HEK293 (cell line): ENCODE measurements at regions of chr1 and their contacts with region 1.

Region 1: GRCh38 chr1:61043010-61043820 is 39.1 kb upstream of the NFIA start:
- H3K4me3 ChIP-seq: peak overlapping the region; percentile 30
- H3K27ac ChIP-seq: no peak overlapping the region; the same call in 1 of the 2 replicates
- H3K4me1 ChIP-seq: no peaks in the 10 kb centered on the region; the same call in 1 of the 2 replicates
- CTCF ChIP-seq: peak; percentile 84

Region 2: GRCh38 chr1:60727552-60727951 is 315.7 kb before region 1 on chr1:
- CTCF ChIA-PET with region 1: no interaction called
- POLR2A ChIA-PET with region 1: no interaction called
- H3K4me3 ChIP-seq: no peak overlapping the region
- H3K27ac ChIP-seq: no peak overlapping the region
- H3K4me1 ChIP-seq: no peaks in the 10 kb centered on the region
- CTCF ChIP-seq: no peak

Region 3: GRCh38 chr1:60848583-60849188 is 194.5 kb before region 1 on chr1:
- CTCF ChIA-PET with region 1: interaction called, 21 read pairs
- POLR2A ChIA-PET with region 1: no interaction called
- H3K4me3 ChIP-seq: no peak overlapping the region
- H3K27ac ChIP-seq: no peak overlapping the region
- H3K4me1 ChIP-seq: no peaks in the 10 kb centered on the region
- CTCF ChIP-seq: no peak

Region 4: GRCh38 chr1:60972841-60973364 is 70.3 kb before region 1 on chr1:
- CTCF ChIA-PET with region 1: interaction called, 44 read pairs
- POLR2A ChIA-PET with region 1: no interaction called
- H3K4me3 ChIP-seq: no peak overlapping the region
- H3K27ac ChIP-seq: no peak overlapping the region
- H3K4me1 ChIP-seq: peaks cover 3% of the 10 kb centered on the region
- CTCF ChIP-seq: no peak

Region 5: DNA sequence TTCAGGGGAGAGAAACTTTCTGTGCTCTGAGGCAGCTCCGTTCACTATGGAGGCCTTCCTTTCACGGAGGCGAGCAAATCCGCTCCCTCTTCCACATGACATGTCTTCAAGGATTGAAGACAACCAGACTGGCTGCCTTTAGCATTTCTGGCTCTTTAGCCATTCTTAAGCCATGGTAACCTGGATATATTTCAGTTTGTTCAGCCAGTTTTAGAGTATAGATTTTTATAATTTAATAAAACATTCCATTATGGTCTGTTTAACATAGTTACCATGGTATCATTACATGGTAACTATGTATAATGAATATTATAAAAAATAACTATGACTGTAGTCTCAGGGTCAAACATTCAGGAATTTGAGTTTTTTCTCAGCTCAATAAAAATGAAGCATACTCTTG is 15.1 kb before region 1 on chr1:
- CTCF ChIA-PET with region 1: interaction called, 12 read pairs
- POLR2A ChIA-PET with region 1: no interaction called
- H3K4me3 ChIP-seq: no peak overlapping the region
- H3K27ac ChIP-seq: no peak overlapping the region
- H3K4me1 ChIP-seq: no peaks in the 10 kb centered on the region
- CTCF ChIP-seq: no peak